Activated T-helper 1 cell treated with anti-CD3 and anti-CD28 coated beads, Interleukin-12 subunit alpha, Interleukin-12 subunit beta, Interleukin-2, Interleukin-4 antibody, amounts not matched to agents 30 ng/mL and 10 ng/mL and 1 ng/mL, durations not matched to agents 14 hours and 24 hours and 36 hours (primary cell): ENCODE measurements at regions of chr9 and their contacts with region 1.

Region 1: GRCh38 chr9:94603259-94604160 is 9.9 kb upstream of the FBP2 start:
- DNase-seq: peak; percentile 53
- H3K4me3 Mint-ChIP-seq: no peak overlapping the region
- H3K27ac Mint-ChIP-seq: no peak overlapping the region
- H3K4me1 Mint-ChIP-seq: peaks cover 6% of the 10 kb centered on the region
- H3K27me3 Mint-ChIP-seq: peaks cover 22% of the 10 kb centered on the region

Region 2: GRCh38 chr9:94065535-94065961 is 538.0 kb before region 1 on chr9:
- intact Hi-C with region 1: loop called (anchors 10 kb)
- DNase-seq: peak; percentile 43
- H3K4me3 Mint-ChIP-seq: no peak overlapping the region
- H3K27ac Mint-ChIP-seq: no peak overlapping the region
- H3K4me1 Mint-ChIP-seq: peaks cover 5% of the 10 kb centered on the region
- H3K27me3 Mint-ChIP-seq: no peaks in the 10 kb centered on the region

Region 3: DNA sequence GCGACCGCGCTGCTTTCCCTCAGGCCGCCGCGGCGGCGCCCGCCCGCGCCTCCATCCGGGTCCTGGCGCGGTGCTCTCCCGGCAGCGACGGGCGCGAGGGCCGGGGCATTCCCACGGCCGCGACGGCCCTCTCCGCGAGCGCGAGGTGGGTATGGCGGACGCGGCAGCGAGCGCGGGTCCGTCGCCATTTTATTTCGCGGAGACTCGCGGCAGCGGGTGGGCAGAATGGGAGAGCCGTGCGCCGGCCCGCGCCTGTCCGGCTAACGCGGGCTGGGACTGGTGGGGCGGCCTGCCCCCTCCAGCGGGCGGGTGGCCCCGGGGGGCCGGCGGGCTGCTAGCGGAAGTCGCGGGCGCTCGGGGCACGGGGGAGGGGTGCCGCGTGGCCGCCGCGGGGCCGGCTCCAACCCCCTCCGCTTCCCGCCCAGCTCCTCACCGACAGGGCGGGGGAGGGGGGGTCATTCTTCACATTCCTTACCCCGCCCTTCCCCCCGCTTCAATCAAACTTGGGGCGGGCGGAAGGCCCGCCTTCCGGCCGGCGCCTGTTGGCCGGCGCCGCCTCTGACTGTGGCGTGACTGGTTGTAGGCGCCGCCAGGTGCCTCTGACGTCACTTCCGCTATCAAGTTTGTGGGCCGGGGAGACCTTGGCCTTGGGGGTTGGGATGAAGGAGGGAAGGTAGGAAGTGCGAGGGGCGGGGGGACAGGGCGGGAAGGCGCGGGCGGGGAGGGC is 437.1 kb before region 1 on chr9:
- intact Hi-C with region 1: loop called (anchors 1 kb)
- DNase-seq: peak; percentile 92
- H3K4me3 Mint-ChIP-seq: peak overlapping the region; percentile 95
- H3K27ac Mint-ChIP-seq: peak overlapping the region; percentile 89
- H3K4me1 Mint-ChIP-seq: peaks cover 46% of the 10 kb centered on the region
- H3K27me3 Mint-ChIP-seq: peaks cover 2% of the 10 kb centered on the region

Region 4: GRCh38 chr9:94259077-94259892 is 344.2 kb before region 1 on chr9 and contains the start of gene ZNF169:
- intact Hi-C with region 1: loop called (anchors 5 kb)
- DNase-seq: peak; percentile 85
- H3K4me3 Mint-ChIP-seq: peak within 1 kb of the TSS; percentile 100
- H3K27ac Mint-ChIP-seq: peak within 1 kb of the TSS; percentile 99
- H3K4me1 Mint-ChIP-seq: peaks cover 36% of the 10 kb centered on the region
- H3K27me3 Mint-ChIP-seq: peaks cover 10% of the 10 kb centered on the region
- total RNA-seq, gene ZNF169: 9.3 and 9.9 TPM in 2 replicates

Region 5: DNA sequence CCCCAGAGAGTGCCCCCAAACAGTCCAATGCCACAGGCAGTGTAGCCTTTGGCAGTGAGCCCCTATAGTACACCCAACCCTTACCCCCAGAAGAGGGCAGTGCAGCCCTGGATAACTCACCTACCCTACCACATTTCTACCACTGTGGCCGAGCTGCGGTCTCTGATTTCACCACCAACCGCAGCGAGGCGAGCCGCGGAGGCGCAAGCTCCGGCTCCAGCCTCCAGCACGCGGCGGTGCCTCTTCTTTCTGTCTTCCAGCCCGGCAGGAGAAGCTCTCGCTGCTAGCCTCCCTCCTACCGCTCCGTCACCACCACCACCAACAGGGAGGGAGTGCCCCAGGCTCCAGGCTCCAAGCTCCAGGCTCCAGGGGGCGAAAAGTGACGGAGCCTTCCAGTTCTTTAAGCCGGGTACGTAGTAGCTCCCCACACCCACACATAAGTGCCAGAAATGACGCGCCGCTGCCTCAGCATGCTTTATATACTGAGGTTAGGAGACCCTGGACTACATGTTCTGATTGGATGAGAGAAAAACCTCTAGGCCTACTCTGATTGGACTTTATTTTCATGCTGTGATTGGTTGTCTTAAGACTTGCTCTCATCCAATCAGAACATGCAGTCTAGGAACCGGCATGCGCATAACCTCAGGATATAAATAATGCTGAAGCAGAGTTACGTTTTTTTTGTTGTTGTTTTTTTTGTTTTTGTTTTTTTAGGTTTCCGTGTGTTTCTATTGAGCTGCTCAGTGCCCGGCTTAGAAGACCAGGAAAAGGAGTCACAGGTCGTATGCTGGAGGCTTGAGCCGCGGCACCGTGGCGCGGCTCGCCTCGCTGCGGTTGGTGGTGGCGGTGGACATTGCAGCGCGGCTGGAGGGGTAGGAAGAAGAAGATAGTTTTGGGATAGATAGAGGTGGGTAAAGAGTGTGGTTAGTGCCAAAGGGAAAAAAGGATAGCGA is 48.8 kb before region 1 on chr9 and contains the start of gene PCAT7:
- intact Hi-C with region 1: loop called (anchors 1 kb)
- DNase-seq: no peak
- H3K4me3 Mint-ChIP-seq: no peak within 1 kb of the TSS
- H3K27ac Mint-ChIP-seq: no peak within 1 kb of the TSS
- H3K4me1 Mint-ChIP-seq: no peaks in the 10 kb centered on the region
- H3K27me3 Mint-ChIP-seq: peaks cover 9% of the 10 kb centered on the region
- total RNA-seq, gene PCAT7: not detected in 2 replicates

Region 6: GRCh38 chr9:94746541-94747370 is 143.2 kb after region 1 on chr9:
- intact Hi-C with region 1: no loop called
- DNase-seq: no peak
- H3K4me3 Mint-ChIP-seq: no peak overlapping the region
- H3K27ac Mint-ChIP-seq: no peak overlapping the region
- H3K4me1 Mint-ChIP-seq: no peaks in the 10 kb centered on the region
- H3K27me3 Mint-ChIP-seq: peaks cover 1% of the 10 kb centered on the region